ENCODE measurements at regions of chr4 and their contacts with region 1.

Region 1: GRCh38 chr4:145732895-145733880 is 53.2 kb downstream of the C4orf51 start:
- DNase-seq: peak; percentile 97
- ATAC-seq: peak; percentile 81 to 96 (median 93)
- H3K4me3 ChIP-seq: peak overlapping the region; percentile 8 to 82 (median 66)
- H3K27ac ChIP-seq: peak overlapping the region; percentile 88 to 99 (median 96)
- H3K4me1 ChIP-seq: peaks cover 13 to 57% (median 46%) of the 10 kb centered on the region in 12 donors
- H3K27me3 ChIP-seq: no peaks in the 10 kb centered on the region
- CTCF ChIP-seq: peak in 3 of 12 donors; percentile 2 to 36 (median 14)
- POLR2A ChIP-seq: peak in 1 of 2 donors; percentile 76

Region 2: DNA sequence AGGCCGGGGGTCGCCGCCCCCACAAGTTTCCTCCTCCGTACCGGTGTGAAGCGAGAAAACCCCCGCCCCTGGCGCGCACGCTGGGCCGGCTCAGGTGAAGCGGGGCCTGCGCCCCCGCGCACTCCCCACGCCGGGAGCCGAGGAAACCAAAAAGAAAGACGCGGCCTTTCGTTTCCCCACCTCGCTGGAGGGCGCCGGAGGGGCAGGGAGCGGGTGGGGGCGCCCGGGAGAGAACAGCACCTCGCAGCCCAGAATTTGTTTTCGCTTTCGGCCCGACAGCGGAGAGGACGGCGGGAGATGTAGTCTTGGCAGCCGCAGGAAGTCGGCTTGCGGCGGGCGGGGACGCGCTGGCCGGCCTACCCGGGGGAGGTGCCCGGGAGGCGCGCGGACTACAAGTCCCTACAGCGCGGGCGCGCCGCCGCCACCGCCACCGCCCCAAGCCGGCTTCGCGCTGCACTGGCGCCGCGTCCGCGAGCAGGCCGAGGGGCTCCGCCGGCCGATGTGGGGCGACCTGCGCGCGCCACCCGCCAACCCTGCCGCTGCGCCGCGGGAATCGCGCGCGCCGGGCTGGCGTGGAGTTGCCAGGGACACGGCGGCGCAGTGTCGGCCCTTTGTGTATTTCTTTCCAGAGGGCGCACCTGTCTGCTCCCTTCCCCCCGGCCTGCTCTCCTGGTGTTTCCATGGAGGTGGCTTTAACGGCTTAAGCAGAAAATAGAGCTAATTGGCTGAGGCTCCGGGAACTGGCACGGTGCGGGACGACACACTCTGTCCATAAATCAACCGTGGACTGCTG is 552.7 kb before region 1 on chr4 and contains the start of gene OTUD4:
- intact Hi-C with region 1: loop called in 1 of 10 experiments (anchors 10 kb)
- DNase-seq: peak; percentile 96 to 98 (median 97)
- ATAC-seq: peak; percentile 93 to 97 (median 96)
- H3K4me3 ChIP-seq: peak within 1 kb of the TSS; percentile 51 to 94 (median 82)
- H3K27ac ChIP-seq: peak within 1 kb of the TSS; percentile 90 to 99 (median 96)
- H3K4me1 ChIP-seq: peaks cover 4 to 42% (median 28%) of the 10 kb centered on the region in 12 donors
- H3K27me3 ChIP-seq: no peaks in the 10 kb centered on the region
- CTCF ChIP-seq: peak in 4 of 12 donors; percentile 19 to 37 (median 30)
- POLR2A ChIP-seq: peak in 1 of 2 donors; percentile 48
- total RNA-seq, gene OTUD4: 23.9 to 42.1 (median 31.1) TPM

Region 3: DNA sequence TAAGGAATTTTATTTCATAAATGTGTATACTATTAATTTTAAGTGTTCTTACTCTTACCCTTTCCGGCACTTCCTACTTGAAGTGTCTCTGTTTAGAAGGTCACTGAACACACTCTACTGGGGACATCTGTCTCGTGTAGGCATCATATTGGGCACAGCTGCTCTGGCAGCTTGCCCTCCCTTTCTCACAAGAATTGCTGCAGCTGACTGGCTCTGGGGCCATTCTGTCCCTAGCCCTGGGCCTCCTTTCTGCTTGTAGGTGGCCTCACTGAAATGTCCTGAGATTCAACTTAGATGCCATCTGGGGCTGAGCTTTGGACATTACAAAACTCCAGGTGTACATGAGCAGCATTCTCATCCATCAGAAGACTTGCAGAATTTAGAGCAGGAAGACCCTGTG is 202.0 kb before region 1 on chr4:
- intact Hi-C with region 1: no loop called
- DNase-seq: peak; percentile 27 to 72 (median 45)
- ATAC-seq: peak in 3 of 4 donors; percentile 73 to 82 (median 81)
- H3K4me3 ChIP-seq: no peak overlapping the region
- H3K27ac ChIP-seq: no peak overlapping the region
- H3K4me1 ChIP-seq: peaks cover 0 to 48% (median 16%) of the 10 kb centered on the region in 12 donors
- H3K27me3 ChIP-seq: no peaks in the 10 kb centered on the region
- CTCF ChIP-seq: no peak
- POLR2A ChIP-seq: no peak

Region 4: DNA sequence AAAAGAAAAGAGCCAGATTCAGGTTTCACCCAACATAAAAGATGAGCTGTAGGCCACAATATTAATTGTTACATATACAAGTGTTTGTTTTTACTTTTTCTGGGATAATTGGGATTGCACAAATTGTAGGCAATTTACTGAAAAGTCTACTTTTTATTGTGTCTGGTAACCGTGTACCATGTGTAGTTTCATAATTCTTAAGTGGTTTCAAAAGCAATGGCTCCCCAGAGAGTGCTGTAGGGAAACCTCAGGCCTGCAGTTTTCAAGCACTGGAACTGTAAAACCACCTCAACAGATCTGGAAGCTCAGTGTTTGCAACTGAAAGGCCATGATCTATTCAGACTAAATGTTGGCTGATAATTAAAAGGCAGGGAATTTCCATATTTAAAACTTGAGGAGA is 167.9 kb before region 1 on chr4:
- intact Hi-C with region 1: no loop called
- DNase-seq: no peak
- ATAC-seq: no peak
- H3K4me3 ChIP-seq: no peak overlapping the region
- H3K27ac ChIP-seq: no peak overlapping the region
- H3K4me1 ChIP-seq: no peaks in the 10 kb centered on the region
- H3K27me3 ChIP-seq: no peaks in the 10 kb centered on the region
- CTCF ChIP-seq: no peak
- POLR2A ChIP-seq: no peak

Region 5: GRCh38 chr4:145679991-145680455 is 53.2 kb before region 1 on chr4 and contains the start of gene C4orf51:
- intact Hi-C with region 1: loop called in 1 of 10 experiments (anchors 5 kb)
- DNase-seq: peak in 1 of 5 donors; percentile 26
- ATAC-seq: peak; percentile 54 to 74 (median 64)
- H3K4me3 ChIP-seq: no peak within 1 kb of the TSS
- H3K27ac ChIP-seq: peak within 1 kb of the TSS in 9 of 12 donors; percentile 3 to 53 (median 22)
- H3K4me1 ChIP-seq: peaks cover 0 to 18% (median 13%) of the 10 kb centered on the region in 12 donors
- H3K27me3 ChIP-seq: no peaks in the 10 kb centered on the region
- CTCF ChIP-seq: no peak
- POLR2A ChIP-seq: no peak
- total RNA-seq, gene C4orf51: not detected

Region 6: GRCh38 chr4:145773581-145774234 is 40.5 kb after region 1 on chr4:
- intact Hi-C with region 1: loop called in 1 of 10 experiments (anchors 5 kb)
- DNase-seq: peak in 4 of 5 donors; percentile 21 to 49 (median 34)
- ATAC-seq: peak; percentile 89 to 97 (median 96)
- H3K4me3 ChIP-seq: no peak overlapping the region
- H3K27ac ChIP-seq: peak overlapping the region in 7 of 12 donors; percentile 24 to 70 (median 38)
- H3K4me1 ChIP-seq: peaks cover 0 to 9% (median 0%) of the 10 kb centered on the region in 12 donors
- H3K27me3 ChIP-seq: no peaks in the 10 kb centered on the region
- CTCF ChIP-seq: no peak
- POLR2A ChIP-seq: no peak

Region 7: DNA sequence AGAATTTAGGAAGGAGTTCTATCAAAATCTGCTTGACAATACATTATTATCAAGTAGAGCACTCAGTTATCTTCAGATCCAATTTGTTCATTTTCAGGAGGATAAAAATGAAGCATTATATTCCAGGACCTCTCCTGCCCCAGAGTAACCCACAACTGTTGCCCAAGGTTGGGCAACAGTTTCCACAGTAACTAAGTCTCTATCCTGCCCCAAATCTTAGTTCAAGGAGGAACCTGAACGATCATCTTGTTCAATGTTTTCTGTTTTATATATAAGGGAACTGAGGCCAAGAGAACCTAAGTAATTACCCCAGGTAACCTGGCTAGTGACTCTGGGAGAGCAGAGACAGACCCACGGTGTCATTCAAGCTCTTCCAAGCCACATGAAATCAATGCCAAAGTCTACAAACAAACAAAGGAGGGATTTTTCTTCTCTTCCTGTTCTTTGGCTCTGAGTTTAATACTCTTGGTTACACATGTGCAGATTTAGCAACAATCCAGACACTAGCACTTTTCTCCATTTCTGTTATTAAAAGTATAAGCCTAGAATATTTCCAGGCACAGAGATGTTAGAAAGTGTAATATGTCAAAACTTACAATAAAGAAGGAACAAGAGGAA is 52.3 kb after region 1 on chr4:
- intact Hi-C with region 1: loop called in 1 of 10 experiments (anchors 10 kb)
- DNase-seq: no peak
- ATAC-seq: peak in 1 of 4 donors; percentile 39
- H3K4me3 ChIP-seq: no peak overlapping the region
- H3K27ac ChIP-seq: peak overlapping the region in 2 of 12 donors; percentile 1 to 25
- H3K4me1 ChIP-seq: peaks cover 0 to 21% (median 3%) of the 10 kb centered on the region in 12 donors
- H3K27me3 ChIP-seq: no peaks in the 10 kb centered on the region
- CTCF ChIP-seq: no peak
- POLR2A ChIP-seq: no peak

Region 8: GRCh38 chr4:145808021-145808650 is 74.9 kb after region 1 on chr4:
- intact Hi-C with region 1: loop called in 3 of 10 experiments (anchors 5 to 10 kb)
- DNase-seq: no peak
- ATAC-seq: peak in 3 of 4 donors; percentile 72 to 80 (median 74)
- H3K4me3 ChIP-seq: no peak overlapping the region
- H3K27ac ChIP-seq: peak overlapping the region in 7 of 12 donors; percentile 15 to 75 (median 61)
- H3K4me1 ChIP-seq: peaks cover 4 to 46% (median 25%) of the 10 kb centered on the region in 12 donors
- H3K27me3 ChIP-seq: no peaks in the 10 kb centered on the region
- CTCF ChIP-seq: no peak
- POLR2A ChIP-seq: no peak

Region 9: DNA sequence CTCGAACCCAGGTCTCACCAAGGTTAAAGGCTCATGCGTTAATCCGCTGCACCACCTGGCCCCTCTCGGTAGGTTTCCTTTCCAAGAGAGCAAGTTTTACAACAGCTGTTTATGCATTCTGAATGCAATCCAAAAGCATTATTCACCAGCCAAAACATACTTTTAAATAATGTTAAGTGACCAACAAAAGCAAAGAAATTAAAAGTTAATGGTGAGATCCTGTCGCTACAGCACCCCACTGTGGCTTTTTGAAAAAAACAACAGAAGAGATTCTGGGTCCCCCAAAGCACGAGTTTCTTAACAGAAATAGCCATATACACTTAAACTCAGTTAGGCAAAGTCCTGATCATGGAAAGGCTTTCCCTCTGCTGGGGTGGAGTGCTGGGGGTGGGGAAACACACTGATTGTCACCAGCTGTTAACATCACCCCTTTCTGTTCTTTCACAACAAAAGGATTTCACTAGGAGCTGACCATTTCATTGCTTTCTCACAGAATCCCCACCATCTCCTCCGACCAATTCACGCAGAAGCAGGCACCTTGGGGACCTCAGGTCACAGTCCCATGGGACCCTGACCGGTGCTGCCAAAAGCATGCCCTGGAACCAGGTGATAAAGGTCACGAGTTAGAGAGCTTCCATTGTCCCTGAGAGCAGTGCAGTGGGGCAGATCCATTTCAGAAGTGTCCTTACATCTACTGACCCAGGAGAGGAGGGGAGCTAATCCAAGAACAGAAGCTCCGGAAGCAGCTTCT is 154.2 kb after region 1 on chr4:
- intact Hi-C with region 1: loop called in 1 of 10 experiments (anchors 5 kb)
- DNase-seq: peak in 2 of 5 donors; percentile 25 to 45
- ATAC-seq: peak; percentile 38 to 78 (median 56)
- H3K4me3 ChIP-seq: peak overlapping the region in 1 of 12 donors; percentile 2
- H3K27ac ChIP-seq: peak overlapping the region in 10 of 12 donors; percentile 34 to 77 (median 54)
- H3K4me1 ChIP-seq: peaks cover 3 to 38% (median 20%) of the 10 kb centered on the region in 12 donors
- H3K27me3 ChIP-seq: no peaks in the 10 kb centered on the region
- CTCF ChIP-seq: peak in 7 of 12 donors; percentile 10 to 46 (median 35)
- POLR2A ChIP-seq: no peak